ENCODE measurements at regions of chr14 and their contacts with region 1.

Region 1: DNA sequence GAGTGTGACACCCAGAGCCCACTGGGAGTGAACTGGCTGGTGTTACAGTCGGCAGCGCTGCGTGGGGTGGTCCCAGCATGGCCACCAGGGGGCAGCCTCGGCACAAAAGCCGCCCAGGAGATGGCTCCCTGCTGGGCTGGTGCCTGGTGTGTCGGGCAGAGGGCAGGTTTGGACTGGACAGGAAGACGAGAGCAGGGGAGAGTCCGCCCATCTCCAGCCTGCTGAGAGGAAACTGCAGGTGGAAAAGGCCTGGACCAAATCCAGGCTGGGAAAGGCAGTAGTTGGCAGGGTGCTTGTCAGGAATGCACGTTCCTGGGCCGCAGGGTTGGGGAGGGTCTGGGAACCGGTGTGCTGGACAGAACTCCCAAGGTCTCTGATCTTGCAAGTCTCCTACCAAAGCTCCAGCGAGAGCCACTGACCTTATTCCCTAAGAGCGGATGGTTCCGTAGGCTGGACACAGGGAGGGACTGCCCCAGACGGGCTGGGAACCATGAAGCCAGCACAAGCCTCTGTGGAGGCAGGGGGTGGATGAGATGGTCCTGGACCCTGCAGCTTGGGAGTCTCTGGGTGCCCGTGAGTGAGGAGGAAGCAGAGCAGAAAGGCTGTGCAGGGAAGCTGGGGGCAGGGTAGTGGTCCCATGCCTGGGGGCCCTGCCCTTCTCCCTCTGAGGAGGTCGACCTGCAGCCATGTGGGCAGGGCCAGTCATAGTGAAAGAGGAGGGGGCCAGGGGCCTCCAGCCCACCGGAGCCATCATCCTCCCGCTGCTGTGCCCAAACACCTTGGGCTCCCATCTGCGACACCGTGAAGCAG is 1.8 kb downstream of the AHNAK2 start:
- DNase-seq: peak; percentile 91
- ATAC-seq: peak; percentile 62 to 67
- H3K4me3 ChIP-seq: no peak overlapping the region
- H3K27ac ChIP-seq: no peak overlapping the region
- H3K4me1 ChIP-seq: peaks cover 77% of the 10 kb centered on the region
- H3K27me3 ChIP-seq: peaks cover 17% of the 10 kb centered on the region
- CTCF ChIP-seq: peak; percentile 97

Region 2: GRCh38 chr14:104650057-104650981 is 326.1 kb before region 1 on chr14:
- intact Hi-C with region 1: no loop called
- DNase-seq: peak; percentile 69
- ATAC-seq: peak; percentile 85
- H3K4me3 ChIP-seq: peak overlapping the region; percentile 47
- H3K27ac ChIP-seq: no peak overlapping the region
- H3K4me1 ChIP-seq: peaks cover 7% of the 10 kb centered on the region
- H3K27me3 ChIP-seq: no peaks in the 10 kb centered on the region
- CTCF ChIP-seq: peak; percentile 93

Region 3: DNA sequence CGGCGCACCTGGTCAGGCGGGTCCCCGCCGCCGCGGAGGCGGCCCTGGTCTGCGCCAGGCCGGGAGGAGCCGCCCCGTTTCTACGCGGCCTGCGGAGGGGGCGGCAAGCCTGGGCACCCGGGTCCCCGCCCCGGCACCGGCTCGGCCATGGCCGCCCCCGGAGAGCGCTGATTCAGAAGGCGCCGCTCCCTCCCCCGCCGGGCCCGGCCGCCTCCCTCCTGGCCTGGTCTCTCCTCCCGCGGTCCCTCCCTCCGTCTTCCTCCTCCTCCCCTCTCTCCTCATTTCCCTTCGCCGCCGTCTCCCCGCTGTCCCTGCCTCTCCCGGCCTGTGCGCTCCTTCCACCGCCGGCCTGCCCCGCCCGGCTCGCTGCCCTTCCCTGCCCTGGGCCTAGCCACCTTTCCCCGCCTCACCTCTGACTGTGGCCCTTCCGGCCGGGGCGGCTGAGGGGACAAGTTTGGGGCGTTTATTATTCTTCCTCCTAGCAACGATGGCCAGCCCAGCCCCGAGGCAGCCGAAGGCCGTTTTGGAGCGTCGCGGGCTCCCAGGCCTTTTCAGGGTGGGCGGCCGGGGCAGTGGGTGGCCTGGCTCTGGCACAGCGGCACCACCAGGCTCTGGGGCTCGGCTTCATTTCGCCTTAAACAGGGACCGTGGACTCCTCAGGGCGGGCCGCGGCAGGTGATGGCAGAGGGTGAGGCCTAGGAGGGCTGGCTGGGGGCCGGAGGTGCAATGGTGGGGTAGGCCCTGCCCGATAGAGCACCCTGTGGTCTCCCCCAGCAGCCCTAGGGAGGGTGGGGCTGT is 110.6 kb before region 1 on chr14:
- intact Hi-C with region 1: no loop called
- DNase-seq: peak; percentile 76
- ATAC-seq: peak; percentile 68 to 79
- H3K4me3 ChIP-seq: peak overlapping the region; percentile 66
- H3K27ac ChIP-seq: peak overlapping the region; percentile 83
- H3K4me1 ChIP-seq: peaks cover 24% of the 10 kb centered on the region
- H3K27me3 ChIP-seq: peaks cover 5% of the 10 kb centered on the region
- CTCF ChIP-seq: no peak

Region 4: DNA sequence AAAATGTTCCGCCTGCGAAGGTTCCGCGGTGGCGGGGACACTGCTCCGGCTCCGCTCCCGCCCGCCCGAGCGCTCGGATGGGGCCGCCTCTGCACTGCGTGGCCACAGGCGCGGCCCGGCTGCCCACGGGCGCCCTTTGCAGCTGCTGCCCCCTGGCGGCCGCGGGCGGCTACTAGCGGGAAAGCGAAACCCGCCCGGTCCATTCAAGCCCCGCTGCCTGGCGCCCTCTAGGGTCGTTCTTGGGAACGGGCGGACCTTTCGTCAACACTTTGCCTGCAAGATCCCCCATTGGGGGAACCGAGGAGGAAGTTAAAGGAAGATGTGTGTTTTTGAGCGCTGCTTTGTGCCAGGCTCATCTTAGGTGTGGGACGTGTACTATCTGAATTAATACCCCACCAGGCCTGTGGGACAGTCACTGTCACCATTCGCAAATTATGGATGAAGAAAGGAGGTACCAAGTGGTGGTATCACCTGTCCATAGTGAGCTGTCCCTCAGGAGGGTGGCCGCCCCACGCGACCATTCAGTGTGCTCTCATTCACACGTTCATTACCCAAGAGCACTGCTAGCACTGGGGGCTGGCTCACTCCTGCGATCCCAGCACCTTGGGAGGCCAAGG is 69.4 kb after region 1 on chr14:
- intact Hi-C with region 1: loop called (anchors 10 kb)
- DNase-seq: peak; percentile 95
- ATAC-seq: peak; percentile 95 to 96
- H3K4me3 ChIP-seq: no peak overlapping the region
- H3K27ac ChIP-seq: no peak overlapping the region
- H3K4me1 ChIP-seq: peaks cover 10% of the 10 kb centered on the region
- H3K27me3 ChIP-seq: no peaks in the 10 kb centered on the region
- CTCF ChIP-seq: peak; percentile 100

Region 5: GRCh38 chr14:105090493-105091053 is 114.2 kb after region 1 on chr14:
- intact Hi-C with region 1: no loop called
- DNase-seq: peak; percentile 90
- ATAC-seq: peak; percentile 58 to 61
- H3K4me3 ChIP-seq: no peak overlapping the region
- H3K27ac ChIP-seq: peak overlapping the region; percentile 49
- H3K4me1 ChIP-seq: peaks cover 69% of the 10 kb centered on the region
- H3K27me3 ChIP-seq: peaks cover 15% of the 10 kb centered on the region
- CTCF ChIP-seq: peak; percentile 99

Region 6: GRCh38 chr14:105144666-105145380 is 168.4 kb after region 1 on chr14:
- intact Hi-C with region 1: no loop called
- DNase-seq: no peak
- ATAC-seq: peak in 1 of 2 donors; percentile 2
- H3K4me3 ChIP-seq: no peak overlapping the region
- H3K27ac ChIP-seq: no peak overlapping the region
- H3K4me1 ChIP-seq: no peaks in the 10 kb centered on the region
- H3K27me3 ChIP-seq: no peaks in the 10 kb centered on the region
- CTCF ChIP-seq: no peak

Measured in lower lobe of right lung (tissue), 2 donors.